ENCODE measurements at regions of chr3 and their contacts with region 1.

Region 1: GRCh38 chr3:14144423-14145075 is 19.7 kb downstream of the TMEM43 start:
- DNase-seq: peak; percentile 38 to 97 (median 66)
- ATAC-seq: peak; percentile 65
- H3K4me3 ChIP-seq: peak overlapping the region; percentile 26
- H3K4me3 Mint-ChIP-seq: peak overlapping the region; percentile 66
- H3K27ac ChIP-seq: peak overlapping the region; percentile 93 to 98
- H3K27ac Mint-ChIP-seq: peak overlapping the region; percentile 96
- H3K4me1 ChIP-seq: peaks cover 67% of the 10 kb centered on the region
- H3K4me1 Mint-ChIP-seq: peaks cover 59% of the 10 kb centered on the region
- H3K27me3 ChIP-seq: no peaks in the 10 kb centered on the region
- H3K27me3 Mint-ChIP-seq: no peaks in the 10 kb centered on the region
- CTCF ChIP-seq: no peak

Region 2: DNA sequence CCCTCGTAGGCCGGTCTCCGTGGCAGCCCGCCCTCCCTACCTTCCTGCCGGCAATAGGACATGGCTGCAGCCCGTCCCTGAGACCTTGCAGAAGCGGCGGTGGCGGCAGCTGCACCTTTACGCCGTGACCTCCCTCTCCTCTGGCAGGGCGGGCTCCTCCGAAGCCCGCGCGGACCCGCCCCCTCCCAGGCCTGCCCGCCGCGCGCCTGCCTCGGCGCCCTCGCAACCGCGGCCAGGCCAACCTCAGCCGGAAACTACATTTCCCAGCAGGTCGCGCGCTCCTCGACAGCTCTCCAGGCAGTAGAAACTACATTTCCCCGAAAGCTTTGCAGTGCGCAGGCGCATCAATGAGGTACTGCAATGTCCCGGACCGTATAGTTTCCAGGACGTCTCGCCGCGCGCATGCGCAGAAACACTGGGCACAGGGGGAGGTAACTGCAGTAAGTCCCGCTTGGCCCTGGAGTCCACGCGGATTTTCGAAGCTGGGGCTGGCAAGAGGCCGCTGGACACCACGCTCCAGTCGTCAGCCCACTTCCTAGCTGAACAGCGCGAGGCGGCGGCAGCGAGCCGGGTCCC is 19.8 kb before region 1 on chr3 and contains the starts of genes CHCHD4 and TMEM43:
- CTCF ChIA-PET with region 1: interaction called, 44 read pairs
- POLR2A ChIA-PET with region 1: interaction called, 84 read pairs
- intact Hi-C with region 1: loop called (anchors 1 kb)
- DNase-seq: peak; percentile 94 to 100 (median 98)
- ATAC-seq: peak; percentile 89
- H3K4me3 ChIP-seq: peak within 1 kb of the TSS; percentile 96
- H3K4me3 Mint-ChIP-seq: peak within 1 kb of the TSS; percentile 97
- H3K27ac ChIP-seq: peak within 1 kb of the TSS; percentile 76 to 86
- H3K27ac Mint-ChIP-seq: peak within 1 kb of the TSS; percentile 91
- H3K4me1 ChIP-seq: peaks cover 53% of the 10 kb centered on the region
- H3K4me1 Mint-ChIP-seq: peaks cover 73% of the 10 kb centered on the region
- H3K27me3 ChIP-seq: no peaks in the 10 kb centered on the region
- H3K27me3 Mint-ChIP-seq: no peaks in the 10 kb centered on the region
- CTCF ChIP-seq: no peak
- total RNA-seq, gene CHCHD4: 0.50 to 1.1 TPM
- total RNA-seq, gene TMEM43: 24.8 to 27.6 TPM

Region 3: GRCh38 chr3:14426063-14426620 is 281.6 kb after region 1 on chr3:
- CTCF ChIA-PET with region 1: no interaction called
- POLR2A ChIA-PET with region 1: no interaction called
- intact Hi-C with region 1: loop called in 1 of 2 experiments (anchors 5 kb)
- DNase-seq: peak in 13 of 14 experiments; percentile 25 to 88 (median 43)
- ATAC-seq: peak; percentile 60
- H3K4me3 ChIP-seq: peak overlapping the region; percentile 21
- H3K4me3 Mint-ChIP-seq: peak overlapping the region; percentile 52
- H3K27ac ChIP-seq: peak overlapping the region; percentile 55 to 73
- H3K27ac Mint-ChIP-seq: peak overlapping the region; percentile 98
- H3K4me1 ChIP-seq: peaks cover 96% of the 10 kb centered on the region
- H3K4me1 Mint-ChIP-seq: peaks cover 93% of the 10 kb centered on the region
- H3K27me3 ChIP-seq: no peaks in the 10 kb centered on the region
- H3K27me3 Mint-ChIP-seq: no peaks in the 10 kb centered on the region
- CTCF ChIP-seq: peak; percentile 16

Region 4: DNA sequence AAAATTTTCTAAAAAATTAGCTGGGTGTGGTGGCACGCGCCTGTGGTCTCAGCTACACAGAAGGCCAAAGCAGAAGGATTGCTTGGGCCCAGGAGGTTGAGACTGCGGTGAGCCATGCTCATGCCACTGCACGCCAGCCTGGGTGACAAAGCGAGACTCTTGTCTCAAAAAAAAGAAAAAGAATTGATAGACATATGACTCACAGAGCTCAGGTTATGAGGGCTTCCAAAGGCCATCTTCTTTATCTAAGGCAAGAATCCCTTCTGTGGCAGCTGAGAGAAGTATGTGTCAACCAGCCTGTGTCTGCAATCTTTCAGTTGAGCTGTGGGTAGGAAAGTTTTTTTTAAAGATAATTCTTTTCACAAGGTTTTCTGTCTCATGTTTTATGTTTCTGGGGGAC is 866.6 kb after region 1 on chr3:
- CTCF ChIA-PET with region 1: no interaction called
- POLR2A ChIA-PET with region 1: no interaction called
- intact Hi-C with region 1: no loop called
- DNase-seq: no peak
- ATAC-seq: no peak
- H3K4me3 ChIP-seq: no peak overlapping the region
- H3K4me3 Mint-ChIP-seq: no peak overlapping the region
- H3K27ac ChIP-seq: no peak overlapping the region
- H3K27ac Mint-ChIP-seq: no peak overlapping the region
- H3K4me1 ChIP-seq: no peaks in the 10 kb centered on the region
- H3K4me1 Mint-ChIP-seq: no peaks in the 10 kb centered on the region
- H3K27me3 ChIP-seq: no peaks in the 10 kb centered on the region
- H3K27me3 Mint-ChIP-seq: no peaks in the 10 kb centered on the region
- CTCF ChIP-seq: no peak

Region 5: DNA sequence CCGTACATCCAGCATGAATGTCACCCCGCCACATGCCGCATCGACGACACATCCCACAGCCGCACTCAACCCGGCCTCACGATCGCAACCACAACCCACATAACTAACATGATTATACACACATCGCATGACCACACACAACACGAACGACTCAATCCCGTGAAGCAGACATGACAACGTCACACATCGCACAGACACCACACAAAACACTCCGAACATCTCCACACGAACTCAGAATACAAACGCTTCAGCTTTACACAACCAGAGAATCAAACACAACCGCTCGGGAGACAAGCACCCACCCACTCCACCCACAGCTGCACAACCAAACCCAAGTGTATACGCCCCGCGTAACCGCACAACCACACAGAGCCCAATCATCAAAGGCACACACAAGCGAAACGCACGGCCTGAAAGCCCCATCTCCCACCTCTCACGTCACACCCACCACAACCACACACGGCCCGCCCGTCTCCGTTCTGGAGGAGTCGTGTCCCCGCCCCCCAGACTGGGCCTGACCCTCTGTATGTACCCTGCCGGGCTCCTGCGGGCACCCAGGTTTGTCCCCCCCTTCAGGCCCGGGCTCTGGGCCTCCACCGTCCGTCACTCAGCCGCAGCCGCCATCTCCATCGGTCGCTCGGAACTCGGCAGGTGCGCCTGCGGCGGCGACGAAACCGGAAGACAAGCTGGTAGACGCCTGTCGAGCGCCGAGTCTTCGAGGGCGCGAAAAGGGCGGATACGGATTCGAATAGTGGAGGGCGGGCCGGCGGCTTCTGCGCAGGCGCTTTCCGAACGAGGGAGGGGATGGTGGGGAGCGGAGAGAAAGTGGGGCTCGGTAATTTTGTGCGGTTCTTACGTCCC is 954.2 kb after region 1 on chr3 and contains the start of gene RBSN:
- CTCF ChIA-PET with region 1: no interaction called
- POLR2A ChIA-PET with region 1: no interaction called
- intact Hi-C with region 1: loop called in 1 of 2 experiments (anchors 10 kb)
- DNase-seq: peak; percentile 90 to 98 (median 94)
- ATAC-seq: peak; percentile 72
- H3K4me3 ChIP-seq: peak within 1 kb of the TSS; percentile 92
- H3K4me3 Mint-ChIP-seq: peak within 1 kb of the TSS; percentile 96
- H3K27ac ChIP-seq: peak within 1 kb of the TSS; percentile 96 to 98
- H3K27ac Mint-ChIP-seq: peak within 1 kb of the TSS; percentile 97
- H3K4me1 ChIP-seq: peaks cover 33% of the 10 kb centered on the region
- H3K4me1 Mint-ChIP-seq: peaks cover 36% of the 10 kb centered on the region
- H3K27me3 ChIP-seq: no peaks in the 10 kb centered on the region
- H3K27me3 Mint-ChIP-seq: peaks cover 5% of the 10 kb centered on the region
- CTCF ChIP-seq: no peak
- total RNA-seq, gene RBSN: 57.2 to 57.9 TPM